ENCODE measurements at regions of chr2 and their contacts with region 1.

Region 1: DNA sequence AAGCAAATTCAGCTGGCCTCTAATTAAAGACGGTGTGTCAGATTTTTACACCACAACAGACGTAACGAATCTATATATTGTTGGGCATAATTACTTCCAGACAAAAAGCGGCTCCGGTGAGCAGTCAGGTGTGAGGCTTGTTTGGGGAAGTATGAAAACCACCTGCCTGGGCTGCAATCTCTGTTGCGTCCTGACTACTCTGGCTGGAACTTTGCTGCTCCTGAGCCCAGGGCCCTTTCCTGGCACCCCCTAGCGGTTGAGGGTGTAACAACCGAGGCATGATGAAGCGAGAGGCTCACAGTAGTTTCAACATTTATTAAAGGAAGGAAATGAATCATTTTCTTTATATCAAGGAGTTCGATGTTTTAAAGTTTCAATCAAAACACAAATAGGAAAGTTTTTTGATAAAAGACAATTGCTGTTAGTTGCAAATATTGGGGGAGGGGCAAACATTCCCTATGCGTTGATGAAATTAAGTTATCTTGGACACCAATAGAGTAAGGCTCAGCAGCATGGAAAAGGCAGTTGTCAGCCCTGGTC is 10.6 kb upstream of the ITGB6 start:
- DNase-seq: peak; percentile 71
- ATAC-seq: peak; percentile 69
- H3K4me3 Mint-ChIP-seq: no peak overlapping the region
- H3K27ac Mint-ChIP-seq: no peak overlapping the region
- H3K4me1 Mint-ChIP-seq: peaks cover 27% of the 10 kb centered on the region
- H3K27me3 Mint-ChIP-seq: peaks cover 29% of the 10 kb centered on the region

Region 2: GRCh38 chr2:160180172-160180571 is 30.5 kb before region 1 on chr2:
- CTCF ChIA-PET with region 1: no interaction called
- DNase-seq: no peak
- ATAC-seq: no peak
- H3K4me3 Mint-ChIP-seq: no peak overlapping the region
- H3K27ac Mint-ChIP-seq: no peak overlapping the region
- H3K4me1 Mint-ChIP-seq: peaks cover 3% of the 10 kb centered on the region
- H3K27me3 Mint-ChIP-seq: peaks cover 22% of the 10 kb centered on the region

Region 3: DNA sequence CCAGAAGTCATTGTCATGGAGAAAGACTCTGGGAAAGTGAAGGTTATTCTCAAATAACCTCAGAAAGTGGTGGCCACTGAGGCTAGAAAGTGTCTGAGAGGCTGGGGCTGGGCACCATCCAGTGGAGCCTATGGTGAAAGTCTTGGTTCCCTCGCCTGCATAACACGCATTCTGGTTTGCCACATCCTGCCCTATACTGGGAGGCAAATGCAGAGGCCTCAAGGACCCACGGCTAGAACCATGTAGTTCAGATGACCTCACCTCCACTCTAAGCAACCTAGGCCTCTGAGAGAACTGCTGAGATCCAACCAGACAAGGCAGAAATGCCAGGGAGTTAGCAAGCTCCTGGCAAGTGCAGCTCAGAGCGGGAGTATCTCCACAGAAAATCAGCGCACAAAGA is 15.7 kb before region 1 on chr2:
- CTCF ChIA-PET with region 1: interaction called, 10 read pairs
- DNase-seq: peak; percentile 71
- ATAC-seq: peak; percentile 66
- H3K4me3 Mint-ChIP-seq: no peak overlapping the region
- H3K27ac Mint-ChIP-seq: no peak overlapping the region
- H3K4me1 Mint-ChIP-seq: peaks cover 9% of the 10 kb centered on the region
- H3K27me3 Mint-ChIP-seq: peaks cover 20% of the 10 kb centered on the region

Region 4: DNA sequence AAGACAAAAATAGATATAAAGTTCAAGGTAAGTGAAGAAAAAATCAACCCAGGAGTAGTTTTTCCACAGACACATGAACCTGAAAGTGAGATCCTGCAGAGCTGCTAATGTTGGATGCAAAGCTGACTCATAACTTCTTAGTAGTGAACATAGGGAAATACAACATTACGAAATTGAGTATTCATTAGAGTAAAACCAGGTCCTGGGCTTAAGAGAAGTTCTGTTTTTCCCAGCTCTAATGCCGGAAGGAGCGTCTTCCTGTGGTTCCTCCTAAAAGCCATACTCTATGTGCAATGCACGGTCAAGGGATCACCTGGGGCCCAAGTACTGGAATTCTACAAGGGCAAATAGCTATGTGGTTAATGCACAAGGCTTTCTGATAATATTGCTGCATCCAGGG is 141.3 kb after region 1 on chr2:
- CTCF ChIA-PET with region 1: no interaction called
- DNase-seq: no peak
- ATAC-seq: no peak
- H3K4me3 Mint-ChIP-seq: no peak overlapping the region
- H3K27ac Mint-ChIP-seq: no peak overlapping the region
- H3K4me1 Mint-ChIP-seq: peaks cover 18% of the 10 kb centered on the region
- H3K27me3 Mint-ChIP-seq: no peaks in the 10 kb centered on the region

Measured in activated CD8-positive, alpha-beta memory T cell treated with anti-CD3 and anti-CD28 coated beads, Interleukin-2, amount 10 ng/mL, durations not matched to agents 7 days and 5 days (primary cell).